Activated CD8-positive, alpha-beta T cell treated with anti-CD3 and anti-CD28 coated beads for 36 hours (primary cell): ENCODE measurements at regions of chr1 and their contacts with region 1.

Region 1: DNA sequence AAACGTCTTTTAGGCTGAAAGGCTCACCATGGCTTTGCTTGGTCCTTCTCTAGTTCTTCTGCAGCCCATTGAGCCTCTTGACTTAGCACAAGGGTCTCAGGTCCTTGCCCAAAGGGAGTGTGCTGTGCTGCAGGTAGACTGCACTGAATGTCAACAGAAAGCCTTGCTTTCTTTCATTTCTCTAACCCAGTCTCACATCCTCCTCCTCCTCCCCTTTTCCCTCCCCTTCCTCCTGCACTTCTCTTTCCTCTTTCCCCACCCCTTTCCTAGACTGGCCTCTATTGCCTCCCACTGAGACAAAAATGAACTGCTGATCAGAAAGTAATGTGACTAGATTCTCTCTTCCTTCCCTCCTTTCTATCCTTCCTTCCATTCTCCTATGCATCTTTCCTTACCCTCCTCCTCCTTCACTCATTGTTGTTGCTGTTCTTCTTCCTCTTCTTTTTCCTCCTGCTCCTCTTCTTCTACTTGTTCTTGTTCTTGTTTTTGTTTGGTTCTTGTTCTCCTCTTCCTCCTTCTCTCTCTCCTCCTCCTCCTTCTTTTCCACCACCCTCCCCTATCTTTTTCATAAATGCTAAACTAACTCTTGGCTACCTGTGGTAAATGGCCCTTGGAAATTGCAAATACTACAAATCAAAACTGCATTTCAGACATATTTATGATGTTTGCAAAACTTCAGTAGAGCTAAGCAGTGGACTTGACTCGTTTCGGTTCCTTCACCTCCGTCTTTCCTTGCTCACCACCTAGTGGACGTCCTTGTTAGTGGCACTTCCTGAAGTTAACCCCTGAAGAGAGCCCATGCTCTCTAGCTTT is at the start of gene SELL:
- DNase-seq: peak; percentile 88
- ATAC-seq: peak; percentile 80
- H3K4me3 Mint-ChIP-seq: peak within 1 kb of the TSS; percentile 79
- H3K27ac Mint-ChIP-seq: peak within 1 kb of the TSS; percentile 86
- H3K4me1 Mint-ChIP-seq: peaks cover 18% of the 10 kb centered on the region
- H3K27me3 Mint-ChIP-seq: no peaks in the 10 kb centered on the region
- CTCF ChIP-seq: peak; percentile 91
- total RNA-seq, gene SELL: 105 to 110 TPM

Region 2: GRCh38 chr1:169546087-169546995 is 165.3 kb before region 1 on chr1:
- CTCF ChIA-PET with region 1: interaction called, 21 read pairs
- POLR2A ChIA-PET with region 1: no interaction called
- intact Hi-C with region 1: loop called (anchors 5 kb)
- DNase-seq: peak; percentile 57
- ATAC-seq: peak; percentile 66
- H3K4me3 Mint-ChIP-seq: no peak overlapping the region
- H3K27ac Mint-ChIP-seq: no peak overlapping the region
- H3K4me1 Mint-ChIP-seq: peaks cover 2% of the 10 kb centered on the region
- H3K27me3 Mint-ChIP-seq: no peaks in the 10 kb centered on the region
- CTCF ChIP-seq: peak; percentile 63

Region 3: GRCh38 chr1:169595764-169596711 is 115.6 kb before region 1 on chr1:
- CTCF ChIA-PET with region 1: interaction called, 183 read pairs
- POLR2A ChIA-PET with region 1: interaction called, 3 read pairs
- intact Hi-C with region 1: loop called (anchors 1 kb)
- DNase-seq: peak; percentile 64
- ATAC-seq: peak; percentile 42
- H3K4me3 Mint-ChIP-seq: no peak overlapping the region
- H3K27ac Mint-ChIP-seq: no peak overlapping the region
- H3K4me1 Mint-ChIP-seq: peaks cover 55% of the 10 kb centered on the region
- H3K27me3 Mint-ChIP-seq: no peaks in the 10 kb centered on the region
- CTCF ChIP-seq: no peak

Region 4: DNA sequence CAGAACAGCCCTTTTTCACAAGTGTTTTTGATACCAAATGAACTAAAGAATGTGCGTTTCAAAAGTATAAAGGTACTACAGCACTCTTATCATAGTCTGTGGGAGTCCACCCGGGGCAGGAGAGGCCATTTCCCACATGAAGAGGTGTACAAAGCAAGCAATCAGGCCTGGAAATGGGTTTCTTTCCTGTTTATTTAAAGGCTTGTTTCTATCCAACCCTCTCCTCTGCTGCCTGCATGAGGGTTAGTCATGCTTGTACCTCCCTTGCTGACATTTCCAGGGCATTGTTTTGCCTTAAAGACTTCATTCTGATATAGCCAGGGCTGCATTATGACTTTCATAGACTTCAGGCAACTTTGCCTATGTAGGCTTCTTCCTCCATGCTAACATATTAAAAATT is 93.3 kb before region 1 on chr1:
- CTCF ChIA-PET with region 1: interaction called, 13 read pairs
- POLR2A ChIA-PET with region 1: no interaction called
- intact Hi-C with region 1: no loop called
- DNase-seq: no peak
- ATAC-seq: no peak
- H3K4me3 Mint-ChIP-seq: no peak overlapping the region
- H3K27ac Mint-ChIP-seq: no peak overlapping the region
- H3K4me1 Mint-ChIP-seq: peaks cover 18% of the 10 kb centered on the region
- H3K27me3 Mint-ChIP-seq: no peaks in the 10 kb centered on the region
- CTCF ChIP-seq: no peak

Region 5: GRCh38 chr1:169694304-169695075 is 17.2 kb before region 1 on chr1:
- CTCF ChIA-PET with region 1: interaction called, 43 read pairs
- POLR2A ChIA-PET with region 1: interaction called, 66 read pairs
- intact Hi-C with region 1: loop called (anchors 2 kb)
- DNase-seq: peak; percentile 58
- ATAC-seq: peak; percentile 39
- H3K4me3 Mint-ChIP-seq: peak overlapping the region; percentile 2
- H3K27ac Mint-ChIP-seq: peak overlapping the region; percentile 88
- H3K4me1 Mint-ChIP-seq: peaks cover 91% of the 10 kb centered on the region
- H3K27me3 Mint-ChIP-seq: no peaks in the 10 kb centered on the region
- CTCF ChIP-seq: peak; percentile 55

Region 6: GRCh38 chr1:169722776-169723175 is 11.1 kb after region 1 on chr1:
- CTCF ChIA-PET with region 1: interaction called, 19 read pairs
- POLR2A ChIA-PET with region 1: no interaction called
- intact Hi-C with region 1: no loop called
- DNase-seq: no peak
- ATAC-seq: no peak
- H3K4me3 Mint-ChIP-seq: no peak overlapping the region
- H3K27ac Mint-ChIP-seq: no peak overlapping the region
- H3K4me1 Mint-ChIP-seq: no peaks in the 10 kb centered on the region
- H3K27me3 Mint-ChIP-seq: peaks cover 6% of the 10 kb centered on the region
- CTCF ChIP-seq: no peak